Breast epithelium (tissue), 4 donors: ENCODE measurements at regions of chr7 and their contacts with region 1.

Region 1: GRCh38 chr7:67593794-67594193 is 597.2 kb downstream of the TYW1 start:
- DNase-seq: no peak
- H3K4me3 ChIP-seq: no peak overlapping the region
- H3K27ac ChIP-seq: no peak overlapping the region
- H3K4me1 ChIP-seq: no peaks in the 10 kb centered on the region
- H3K27me3 ChIP-seq: peaks cover 0 to 13% of the 10 kb centered on the region in 2 donors
- CTCF ChIP-seq: no peak
- POLR2A ChIP-seq: no peak

Region 2: DNA sequence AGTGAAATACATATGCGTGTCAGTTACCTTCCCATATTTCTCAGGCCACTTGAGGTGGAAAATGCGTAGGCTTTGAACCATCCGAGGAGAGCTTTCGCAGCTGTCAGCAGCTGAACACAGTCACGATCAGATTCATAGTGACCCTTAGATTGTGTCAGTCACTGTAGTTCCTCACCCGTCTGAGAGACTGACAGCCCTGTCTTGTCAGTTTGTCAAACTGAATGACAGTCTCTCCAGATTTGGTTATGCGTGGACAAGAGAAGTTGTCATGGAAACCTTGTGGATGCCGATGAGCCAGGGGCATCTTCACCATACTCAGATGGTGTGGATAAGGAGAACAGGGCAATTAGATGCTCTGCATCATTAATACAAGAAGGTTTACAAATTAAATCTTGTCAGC is 50.9 kb before region 1 on chr7:
- intact Hi-C with region 1: no loop called
- DNase-seq: no peak
- H3K4me3 ChIP-seq: no peak overlapping the region
- H3K27ac ChIP-seq: no peak overlapping the region
- H3K4me1 ChIP-seq: no peaks in the 10 kb centered on the region
- H3K27me3 ChIP-seq: no peaks in the 10 kb centered on the region
- CTCF ChIP-seq: no peak
- POLR2A ChIP-seq: no peak

Region 3: DNA sequence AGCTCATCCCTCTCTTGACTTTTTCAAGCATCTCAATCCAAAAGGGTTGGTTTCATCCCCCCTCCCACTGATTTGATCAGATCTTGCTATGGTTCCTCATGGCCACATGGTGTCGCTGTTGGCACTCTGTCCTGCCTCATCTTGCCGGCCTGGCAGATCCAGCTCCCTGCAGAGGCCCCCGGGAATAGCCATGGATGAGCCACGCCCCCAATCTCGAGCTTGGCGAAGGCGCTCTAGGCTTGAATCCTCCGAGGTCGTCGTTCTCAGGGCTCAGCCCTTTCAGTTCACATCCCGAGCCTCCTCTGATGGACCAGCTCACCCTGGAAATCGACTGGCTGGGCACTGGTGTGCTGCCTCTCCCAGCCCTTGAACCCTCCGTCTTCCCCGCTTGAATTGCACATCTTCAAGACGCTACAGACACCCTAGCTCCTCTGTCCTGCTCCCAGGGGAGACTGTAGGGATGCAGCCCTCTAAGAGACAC is 31.5 kb after region 1 on chr7:
- intact Hi-C with region 1: no loop called
- DNase-seq: peak; percentile 45 to 60
- H3K4me3 ChIP-seq: peak overlapping the region in 2 of 3 donors; percentile 11 to 52
- H3K27ac ChIP-seq: no peak overlapping the region
- H3K4me1 ChIP-seq: no peaks in the 10 kb centered on the region
- H3K27me3 ChIP-seq: peaks cover 0 to 12% of the 10 kb centered on the region in 2 donors
- CTCF ChIP-seq: peak; percentile 45 to 79 (median 74)
- POLR2A ChIP-seq: no peak

Region 4: DNA sequence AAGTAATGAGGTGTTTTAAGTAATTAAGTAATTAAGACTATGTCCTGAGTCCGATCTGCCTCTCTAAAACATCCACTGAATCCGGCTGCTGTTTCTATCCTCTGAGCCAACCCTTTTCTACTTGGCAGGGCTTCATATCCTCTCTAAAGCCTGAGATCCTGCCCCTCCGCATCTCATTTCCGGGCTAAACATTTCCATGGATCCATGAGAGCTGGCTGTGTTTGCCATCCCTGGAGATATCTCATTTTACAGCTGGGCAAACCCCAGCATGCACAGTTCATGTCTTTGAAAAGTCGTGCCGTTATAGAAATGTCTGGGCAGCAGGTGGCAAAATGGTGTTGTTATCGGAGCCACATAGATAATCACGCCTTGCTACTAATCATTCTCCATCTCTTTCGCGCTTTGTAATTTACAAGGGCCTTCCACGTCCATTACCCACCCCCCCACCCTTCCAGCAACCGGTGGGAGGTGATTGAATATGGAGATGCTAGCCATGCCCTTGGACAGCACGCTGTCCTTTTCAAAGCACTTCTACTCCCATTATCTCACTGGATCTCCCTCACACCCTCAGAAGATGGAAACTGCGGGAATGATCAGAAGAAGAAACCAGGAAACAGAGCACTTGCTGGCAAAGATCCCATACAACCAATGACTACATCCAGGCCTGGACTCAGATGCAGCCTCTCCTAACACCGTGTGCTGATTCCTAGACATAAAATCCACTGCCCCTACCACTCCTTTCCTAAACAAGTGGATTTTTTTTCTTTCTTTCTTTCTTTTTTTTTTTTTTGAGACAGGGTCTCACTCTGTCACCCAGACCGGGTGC is 592.0 kb after region 1 on chr7:
- intact Hi-C with region 1: no loop called
- DNase-seq: no peak
- H3K4me3 ChIP-seq: no peak overlapping the region
- H3K27ac ChIP-seq: no peak overlapping the region
- H3K4me1 ChIP-seq: no peaks in the 10 kb centered on the region
- H3K27me3 ChIP-seq: no peaks in the 10 kb centered on the region
- CTCF ChIP-seq: no peak
- POLR2A ChIP-seq: no peak

Region 5: GRCh38 chr7:69211739-69212138 is 1617.9 kb after region 1 on chr7:
- intact Hi-C with region 1: loop called (anchors 5 kb)
- DNase-seq: no peak
- H3K4me3 ChIP-seq: no peak overlapping the region
- H3K27ac ChIP-seq: no peak overlapping the region
- H3K4me1 ChIP-seq: no peaks in the 10 kb centered on the region
- H3K27me3 ChIP-seq: no peaks in the 10 kb centered on the region
- CTCF ChIP-seq: no peak
- POLR2A ChIP-seq: no peak